Naive thymus-derived CD4-positive, alpha-beta T cell (primary cell): ENCODE measurements at regions of chr19 and their contacts with region 1.

Region 1: DNA sequence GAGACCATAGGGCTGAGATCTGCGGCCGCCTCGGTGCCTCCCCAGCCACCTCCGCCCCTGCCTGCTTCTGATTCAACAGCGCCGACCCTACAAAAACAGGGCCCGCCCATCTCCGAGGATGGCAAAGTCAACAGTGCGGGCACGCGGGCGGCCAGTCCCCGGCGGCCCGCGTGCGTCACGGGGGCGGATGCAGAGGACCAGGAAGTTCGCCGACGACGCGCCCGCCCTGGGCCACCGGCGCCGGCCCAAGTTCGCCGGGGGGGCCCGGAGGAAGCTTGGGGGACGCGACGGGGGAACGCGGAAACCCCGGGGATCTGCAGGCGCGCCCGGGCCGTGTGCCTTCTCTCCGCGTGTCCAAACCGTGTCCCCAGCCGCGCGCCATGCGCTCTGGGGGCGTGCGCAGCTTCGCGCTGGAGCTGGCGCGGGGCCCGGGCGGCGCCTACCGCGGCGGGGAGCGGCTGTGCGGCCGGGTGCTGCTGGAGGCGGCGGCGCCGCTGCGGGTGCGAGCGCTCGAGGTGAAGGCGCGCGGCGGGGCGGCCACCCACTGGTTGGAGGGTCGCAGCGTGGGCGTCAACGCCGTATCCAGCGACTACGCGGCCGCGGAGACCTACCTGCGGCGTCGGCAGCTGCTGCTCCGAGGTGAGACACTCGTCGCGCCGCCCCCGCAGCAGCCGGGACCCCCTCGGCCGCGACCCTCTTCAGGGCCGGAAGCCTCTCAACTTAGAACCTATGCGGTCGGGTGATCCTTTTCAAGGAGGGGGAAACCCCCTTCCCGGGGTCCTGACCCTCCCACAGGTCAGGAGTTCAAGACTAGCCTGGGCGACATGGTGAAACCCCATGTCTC is 6.8 kb upstream of the ARRDC2 start:
- DNase-seq: peak; percentile 89 to 96 (median 95)
- ATAC-seq: peak; percentile 90
- H3K4me3 ChIP-seq: peak overlapping the region; percentile 78
- H3K4me3 Mint-ChIP-seq: peak overlapping the region; percentile 85 to 98 (median 93)
- H3K27ac ChIP-seq: peak overlapping the region; percentile 97
- H3K27ac Mint-ChIP-seq: peak overlapping the region; percentile 94 to 100 (median 99)
- H3K4me1 ChIP-seq: peaks cover 19 to 24% of the 10 kb centered on the region in 2 donors
- H3K4me1 Mint-ChIP-seq: peaks cover 10 to 35% (median 18%) of the 10 kb centered on the region in 7 donors
- H3K27me3 ChIP-seq: no peaks in the 10 kb centered on the region
- H3K27me3 Mint-ChIP-seq: peaks cover 0 to 2% (median 0%) of the 10 kb centered on the region in 5 donors

Region 2: GRCh38 chr19:17873786-17874757 is 127.1 kb before region 1 on chr19:
- CTCF ChIA-PET with region 1: interaction called, 5 read pairs
- POLR2A ChIA-PET with region 1: interaction called, 4 read pairs
- intact Hi-C with region 1: loop called (anchors 5 kb)
- DNase-seq: peak; percentile 42 to 75 (median 68)
- ATAC-seq: peak; percentile 92
- H3K4me3 ChIP-seq: peak overlapping the region; percentile 64
- H3K4me3 Mint-ChIP-seq: peak overlapping the region; percentile 73 to 88 (median 84)
- H3K27ac ChIP-seq: peak overlapping the region; percentile 47
- H3K27ac Mint-ChIP-seq: peak overlapping the region; percentile 18 to 85 (median 74)
- H3K4me1 ChIP-seq: peaks cover 10 to 11% of the 10 kb centered on the region in 2 donors
- H3K4me1 Mint-ChIP-seq: peaks cover 0 to 30% (median 10%) of the 10 kb centered on the region in 7 donors
- H3K27me3 ChIP-seq: no peaks in the 10 kb centered on the region
- H3K27me3 Mint-ChIP-seq: peaks cover 0 to 2% (median 0%) of the 10 kb centered on the region in 5 donors

Region 3: DNA sequence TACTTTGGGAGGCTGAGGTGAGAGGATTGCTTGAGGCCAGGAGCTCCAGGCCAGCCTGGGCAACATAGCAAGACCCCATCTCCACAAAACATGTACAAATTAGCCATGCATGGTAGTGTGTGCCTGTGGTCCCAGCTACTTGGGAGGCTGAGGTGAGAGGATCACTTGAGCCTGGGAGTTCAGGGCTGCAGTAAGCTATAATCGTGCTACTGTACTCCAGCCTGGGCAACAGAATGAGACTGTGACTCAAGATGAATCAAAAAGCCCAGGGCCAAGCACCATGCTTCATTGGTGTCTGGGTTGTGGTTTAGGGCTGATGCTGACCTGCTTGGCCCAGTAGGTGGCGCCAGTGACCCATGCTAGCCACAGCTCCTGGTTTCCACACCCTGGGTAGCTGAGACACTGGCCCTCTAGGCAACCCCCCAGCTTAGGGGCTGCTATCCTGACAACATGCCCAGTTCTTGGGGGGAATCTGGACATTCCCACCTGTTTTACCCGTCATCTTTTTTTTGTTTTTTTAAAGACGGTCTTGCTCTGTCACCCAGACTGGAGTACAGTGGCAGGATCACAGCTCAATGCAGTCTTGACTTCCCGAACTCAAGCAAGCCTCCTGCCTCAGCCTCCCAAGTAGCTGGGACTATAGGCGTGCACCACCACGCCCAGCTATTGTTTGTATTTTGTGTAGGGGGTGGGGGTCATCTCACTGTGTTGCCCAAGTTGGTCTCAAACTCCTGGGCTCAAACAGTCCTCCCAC is 62.9 kb before region 1 on chr19:
- CTCF ChIA-PET with region 1: interaction called, 224 read pairs
- POLR2A ChIA-PET with region 1: interaction called, 11 read pairs
- intact Hi-C with region 1: loop called (anchors 1 kb)
- DNase-seq: peak; percentile 67 to 85 (median 78)
- ATAC-seq: peak; percentile 98
- H3K4me3 ChIP-seq: no peak overlapping the region
- H3K4me3 Mint-ChIP-seq: no peak overlapping the region
- H3K27ac ChIP-seq: no peak overlapping the region
- H3K27ac Mint-ChIP-seq: no peak overlapping the region
- H3K4me1 ChIP-seq: peaks cover 5 to 8% of the 10 kb centered on the region in 2 donors
- H3K4me1 Mint-ChIP-seq: peaks cover 5 to 7% (median 6%) of the 10 kb centered on the region in 7 donors
- H3K27me3 ChIP-seq: no peaks in the 10 kb centered on the region
- H3K27me3 Mint-ChIP-seq: no peaks in the 10 kb centered on the region

Region 4: GRCh38 chr19:17981611-17982010 is 19.5 kb before region 1 on chr19:
- CTCF ChIA-PET with region 1: no interaction called
- POLR2A ChIA-PET with region 1: no interaction called
- intact Hi-C with region 1: no loop called
- DNase-seq: no peak
- ATAC-seq: no peak
- H3K4me3 ChIP-seq: no peak overlapping the region
- H3K4me3 Mint-ChIP-seq: no peak overlapping the region
- H3K27ac ChIP-seq: no peak overlapping the region
- H3K27ac Mint-ChIP-seq: no peak overlapping the region
- H3K4me1 ChIP-seq: no peaks in the 10 kb centered on the region
- H3K4me1 Mint-ChIP-seq: peaks cover 0 to 9% (median 0%) of the 10 kb centered on the region in 7 donors
- H3K27me3 ChIP-seq: no peaks in the 10 kb centered on the region
- H3K27me3 Mint-ChIP-seq: peaks cover 5 to 22% (median 10%) of the 10 kb centered on the region in 5 donors

Region 5: GRCh38 chr19:18058208-18059030 is 57.3 kb after region 1 on chr19:
- CTCF ChIA-PET with region 1: interaction called, 147 read pairs
- POLR2A ChIA-PET with region 1: interaction called, 961 read pairs
- intact Hi-C with region 1: no loop called
- DNase-seq: peak; percentile 76 to 88 (median 82)
- ATAC-seq: peak; percentile 97
- H3K4me3 ChIP-seq: peak overlapping the region; percentile 31
- H3K4me3 Mint-ChIP-seq: peak overlapping the region in 8 of 10 donors; percentile 32 to 62 (median 53)
- H3K27ac ChIP-seq: peak overlapping the region; percentile 62
- H3K27ac Mint-ChIP-seq: peak overlapping the region; percentile 71 to 89 (median 86)
- H3K4me1 ChIP-seq: peaks cover 8 to 13% of the 10 kb centered on the region in 2 donors
- H3K4me1 Mint-ChIP-seq: peaks cover 0 to 18% (median 16%) of the 10 kb centered on the region in 7 donors
- H3K27me3 ChIP-seq: no peaks in the 10 kb centered on the region
- H3K27me3 Mint-ChIP-seq: no peaks in the 10 kb centered on the region

Region 6: GRCh38 chr19:18091217-18091608 is 90.1 kb after region 1 on chr19:
- CTCF ChIA-PET with region 1: interaction called, 6 read pairs
- POLR2A ChIA-PET with region 1: interaction called, 10 read pairs
- intact Hi-C with region 1: no loop called
- DNase-seq: peak; percentile 52 to 84 (median 79)
- ATAC-seq: peak; percentile 84
- H3K4me3 ChIP-seq: no peak overlapping the region
- H3K4me3 Mint-ChIP-seq: peak overlapping the region; percentile 59 to 95 (median 74)
- H3K27ac ChIP-seq: peak overlapping the region; percentile 82
- H3K27ac Mint-ChIP-seq: peak overlapping the region; percentile 94 to 99 (median 98)
- H3K4me1 ChIP-seq: peaks cover 54 to 69% of the 10 kb centered on the region in 2 donors
- H3K4me1 Mint-ChIP-seq: peaks cover 35 to 79% (median 64%) of the 10 kb centered on the region in 7 donors
- H3K27me3 ChIP-seq: no peaks in the 10 kb centered on the region
- H3K27me3 Mint-ChIP-seq: no peaks in the 10 kb centered on the region

Region 7: GRCh38 chr19:18173572-18174288 is 172.6 kb after region 1 on chr19 and contains the start of gene IFI30:
- CTCF ChIA-PET with region 1: no interaction called
- POLR2A ChIA-PET with region 1: interaction called, 3 read pairs
- intact Hi-C with region 1: loop called in 1 of 2 experiments (anchors 2 kb)
- DNase-seq: peak in 8 of 9 donors; percentile 41 to 76 (median 52)
- ATAC-seq: peak; percentile 79
- H3K4me3 ChIP-seq: peak within 1 kb of the TSS; percentile 78
- H3K4me3 Mint-ChIP-seq: peak within 1 kb of the TSS; percentile 84 to 94 (median 90)
- H3K27ac ChIP-seq: peak within 1 kb of the TSS; percentile 67
- H3K27ac Mint-ChIP-seq: peak within 1 kb of the TSS; percentile 62 to 89 (median 79)
- H3K4me1 ChIP-seq: peaks cover 5 to 13% of the 10 kb centered on the region in 2 donors
- H3K4me1 Mint-ChIP-seq: peaks cover 0 to 29% (median 10%) of the 10 kb centered on the region in 7 donors
- H3K27me3 ChIP-seq: no peaks in the 10 kb centered on the region
- H3K27me3 Mint-ChIP-seq: no peaks in the 10 kb centered on the region
- total RNA-seq, gene IFI30: 51.3 to 514 (median 59.5) TPM

Region 8: DNA sequence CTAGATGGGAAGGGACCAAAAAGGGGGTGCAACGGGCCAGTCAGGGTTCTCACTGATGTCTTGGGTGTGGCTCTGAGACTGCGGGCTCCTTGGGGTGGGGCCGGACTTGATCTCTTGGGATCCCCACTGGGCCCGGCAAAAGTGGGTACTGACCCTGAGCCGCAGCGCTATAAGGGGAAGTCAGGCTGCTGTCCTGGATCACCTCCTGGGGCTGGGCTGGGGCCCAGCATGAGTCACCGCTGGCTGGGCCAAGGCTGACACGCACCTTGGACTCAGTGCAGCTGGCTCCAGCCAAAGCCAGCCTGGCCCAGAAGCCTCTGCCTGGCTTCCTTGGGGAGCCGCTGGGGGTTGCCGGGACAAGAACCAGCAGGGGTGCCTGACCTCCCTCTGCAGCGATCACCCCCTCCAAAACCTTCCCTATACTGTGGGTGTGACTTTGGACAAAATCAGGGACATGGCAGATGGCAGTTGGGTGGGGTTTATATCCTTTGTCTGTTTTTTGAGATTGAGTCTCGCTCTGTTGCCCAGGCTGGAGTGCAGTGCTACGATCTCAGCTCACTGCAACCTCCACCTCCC is 273.7 kb after region 1 on chr19:
- CTCF ChIA-PET with region 1: no interaction called
- POLR2A ChIA-PET with region 1: no interaction called
- intact Hi-C with region 1: no loop called
- DNase-seq: peak in 5 of 9 donors; percentile 34 to 57 (median 54)
- ATAC-seq: peak; percentile 29
- H3K4me3 ChIP-seq: no peak overlapping the region
- H3K4me3 Mint-ChIP-seq: peak overlapping the region in 8 of 10 donors; percentile 10 to 66 (median 56)
- H3K27ac ChIP-seq: no peak overlapping the region
- H3K27ac Mint-ChIP-seq: peak overlapping the region in 7 of 9 donors; percentile 43 to 87 (median 81)
- H3K4me1 ChIP-seq: peaks cover 13 to 46% of the 10 kb centered on the region in 2 donors
- H3K4me1 Mint-ChIP-seq: peaks cover 20 to 51% (median 35%) of the 10 kb centered on the region in 7 donors
- H3K27me3 ChIP-seq: no peaks in the 10 kb centered on the region
- H3K27me3 Mint-ChIP-seq: peaks cover 0 to 6% (median 0%) of the 10 kb centered on the region in 5 donors